PC-9 (cell line): ENCODE measurements at regions of chr7 and their contacts with region 1.

Region 1: GRCh38 chr7:16891338-16891737 is 9.6 kb upstream of the AGR3 start:
- DNase-seq: peak; percentile 44 to 73
- H3K4me3 ChIP-seq: no peak overlapping the region
- H3K27ac ChIP-seq: no peak overlapping the region
- H3K4me1 ChIP-seq: peaks cover 15% of the 10 kb centered on the region
- H3K27me3 ChIP-seq: no peaks in the 10 kb centered on the region
- CTCF ChIP-seq: peak; percentile 84

Region 2: GRCh38 chr7:16801111-16801542 is 90.2 kb before region 1 on chr7:
- CTCF ChIA-PET with region 1: interaction called, 11 read pairs
- POLR2A ChIA-PET with region 1: interaction called, 6 read pairs
- intact Hi-C with region 1: loop called (anchors 1 kb)
- DNase-seq: peak; percentile 15 to 79
- H3K4me3 ChIP-seq: no peak overlapping the region
- H3K27ac ChIP-seq: no peak overlapping the region
- H3K4me1 ChIP-seq: peaks cover 50% of the 10 kb centered on the region
- H3K27me3 ChIP-seq: no peaks in the 10 kb centered on the region
- CTCF ChIP-seq: peak; percentile 85

Region 3: GRCh38 chr7:16967300-16967811 is 76.0 kb after region 1 on chr7:
- CTCF ChIA-PET with region 1: no interaction called
- POLR2A ChIA-PET with region 1: no interaction called
- intact Hi-C with region 1: no loop called
- DNase-seq: no peak
- H3K4me3 ChIP-seq: no peak overlapping the region
- H3K27ac ChIP-seq: no peak overlapping the region
- H3K4me1 ChIP-seq: no peaks in the 10 kb centered on the region
- H3K27me3 ChIP-seq: no peaks in the 10 kb centered on the region
- CTCF ChIP-seq: no peak

Region 4: DNA sequence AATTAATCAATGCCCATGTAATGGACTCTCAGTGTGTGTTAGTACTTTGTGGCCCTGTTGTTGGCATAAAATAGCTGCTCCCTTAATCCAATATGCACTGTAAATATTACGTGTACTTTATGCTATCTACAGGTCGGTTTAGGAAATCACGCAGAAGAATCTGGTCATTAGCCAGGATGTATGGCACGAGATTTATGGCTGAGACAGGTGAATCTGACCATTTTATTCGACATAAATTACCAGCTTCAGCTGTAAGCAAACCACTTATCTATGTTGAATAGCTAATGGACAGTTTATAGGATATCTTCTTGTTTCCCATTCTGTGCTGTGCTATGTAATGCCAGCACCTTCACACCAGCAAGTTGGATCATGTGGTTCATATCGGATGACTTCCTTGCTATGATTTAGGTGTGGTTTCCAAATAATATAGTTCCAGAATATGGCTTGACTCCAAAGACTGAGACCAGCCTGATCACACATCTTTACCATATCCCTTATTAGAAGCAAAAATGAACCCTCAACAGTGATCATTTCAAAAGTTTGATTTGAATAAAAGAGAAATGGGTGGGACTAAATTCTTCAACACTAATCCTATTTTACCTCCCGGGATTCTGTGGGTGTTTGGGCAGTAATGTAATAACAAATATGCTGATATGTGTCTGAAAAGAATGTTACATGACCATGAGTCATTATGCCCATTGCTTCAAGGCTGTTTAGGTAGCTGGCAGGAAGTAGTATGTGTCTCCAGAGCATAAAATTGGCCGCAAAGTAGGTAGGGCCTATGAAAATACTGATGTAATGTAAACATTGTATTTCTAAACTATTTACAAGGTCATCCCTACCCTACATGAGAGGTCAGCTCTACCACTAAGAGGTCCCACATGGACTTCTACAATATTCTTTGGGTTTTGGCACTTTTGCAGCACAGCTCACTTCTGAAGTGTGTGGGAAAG is 708.7 kb after region 1 on chr7:
- CTCF ChIA-PET with region 1: no interaction called
- POLR2A ChIA-PET with region 1: no interaction called
- intact Hi-C with region 1: loop called (anchors 1 kb)
- DNase-seq: peak; percentile 58 to 99
- H3K4me3 ChIP-seq: no peak overlapping the region
- H3K27ac ChIP-seq: peak overlapping the region; percentile 82
- H3K4me1 ChIP-seq: peaks cover 39% of the 10 kb centered on the region
- H3K27me3 ChIP-seq: no peaks in the 10 kb centered on the region
- CTCF ChIP-seq: no peak

Region 5: DNA sequence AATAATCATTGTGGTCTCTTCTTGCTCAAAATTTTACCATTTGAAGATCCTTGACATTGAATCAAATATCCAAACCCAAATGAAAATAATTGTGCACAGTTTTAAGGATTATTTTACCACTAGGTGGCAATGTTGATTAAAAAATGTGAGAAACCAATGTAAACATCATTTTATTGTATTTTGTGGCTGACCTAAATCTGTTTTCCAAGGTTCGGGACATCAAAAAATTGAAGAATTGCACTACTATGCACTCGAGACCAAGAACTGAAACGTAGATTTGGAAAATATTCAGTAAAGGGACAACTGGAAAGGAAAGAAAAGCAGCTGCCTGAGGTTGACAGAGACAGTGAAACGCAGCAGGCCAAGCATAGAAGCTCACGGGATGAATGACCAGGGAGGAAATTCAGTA is 789.6 kb after region 1 on chr7:
- CTCF ChIA-PET with region 1: no interaction called
- POLR2A ChIA-PET with region 1: no interaction called
- intact Hi-C with region 1: loop called (anchors 1 kb)
- DNase-seq: peak in 1 of 2 experiments; percentile 60
- H3K4me3 ChIP-seq: no peak overlapping the region
- H3K27ac ChIP-seq: no peak overlapping the region
- H3K4me1 ChIP-seq: no peaks in the 10 kb centered on the region
- H3K27me3 ChIP-seq: no peaks in the 10 kb centered on the region
- CTCF ChIP-seq: peak; percentile 91

Region 6: DNA sequence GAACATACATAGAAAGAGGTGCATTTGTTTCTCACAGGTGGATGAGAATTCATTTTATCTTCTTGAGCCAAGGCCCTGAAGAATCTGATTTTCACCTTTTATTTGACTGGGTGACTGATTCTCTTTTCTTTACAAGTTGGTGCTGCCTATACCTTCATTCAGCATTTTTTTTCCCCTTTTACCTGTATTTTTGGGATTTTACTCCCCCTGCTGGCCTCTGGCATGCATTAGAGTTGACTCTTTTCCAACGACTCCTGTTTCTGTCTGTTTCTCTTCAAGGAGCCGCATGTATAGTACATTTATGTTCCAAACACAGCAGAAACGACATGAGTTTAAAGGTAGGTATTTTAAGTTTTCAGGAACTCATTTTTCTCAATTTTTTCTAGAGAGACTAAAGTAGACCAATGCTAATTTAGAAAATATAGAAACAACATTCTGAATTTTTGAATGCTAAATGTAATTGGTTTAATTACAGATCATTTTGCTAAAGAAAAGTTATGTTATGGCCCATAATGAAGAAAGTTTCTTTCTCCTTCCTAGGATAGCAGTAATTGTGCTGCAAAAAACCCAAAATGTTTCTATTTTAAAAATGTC is 1454.4 kb after region 1 on chr7:
- CTCF ChIA-PET with region 1: no interaction called
- POLR2A ChIA-PET with region 1: no interaction called
- intact Hi-C with region 1: loop called (anchors 1 kb)
- DNase-seq: peak in 1 of 2 experiments; percentile 51
- H3K4me3 ChIP-seq: no peak overlapping the region
- H3K27ac ChIP-seq: no peak overlapping the region
- H3K4me1 ChIP-seq: no peaks in the 10 kb centered on the region
- H3K27me3 ChIP-seq: no peaks in the 10 kb centered on the region
- CTCF ChIP-seq: peak; percentile 98